ENCODE measurements at regions of chr3 and their contacts with region 1.

Region 1: DNA sequence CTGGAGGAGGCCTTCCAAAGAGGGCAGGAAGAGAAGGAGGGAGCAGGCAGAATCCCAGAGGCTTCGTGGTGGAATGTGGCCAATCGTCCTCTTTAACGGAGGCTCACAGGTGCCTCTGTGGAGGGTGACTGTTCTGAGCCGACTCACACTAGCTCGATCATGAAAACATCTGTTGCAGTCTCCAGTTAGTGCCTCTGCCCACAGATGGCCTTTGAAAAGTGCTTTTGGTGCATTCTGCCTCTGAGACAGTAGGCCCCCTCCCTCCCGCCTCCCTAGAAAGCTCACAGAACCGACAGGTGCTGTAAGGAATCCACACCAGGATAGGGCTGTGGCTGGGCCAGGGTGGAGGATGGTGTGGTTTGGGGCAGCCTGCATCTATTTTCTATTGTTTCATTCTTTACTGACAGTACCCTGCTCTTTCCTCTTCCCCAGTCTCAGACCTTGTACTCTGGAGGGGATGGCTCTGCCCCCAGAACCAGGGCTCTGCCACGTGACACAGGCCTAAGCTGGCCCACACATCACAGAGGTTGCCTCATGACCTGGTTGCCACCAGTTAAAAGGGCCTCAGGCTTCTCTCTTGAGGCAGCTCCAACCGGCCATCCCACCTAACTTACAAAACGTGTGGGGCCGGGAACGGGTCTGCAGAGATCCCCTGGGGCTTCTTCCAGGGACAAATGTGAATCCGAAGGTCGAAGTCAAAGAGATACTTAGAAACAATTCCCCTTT is 27.2 kb upstream of the PIGZ start:
- DNase-seq: no peak
- H3K4me3 ChIP-seq: no peak overlapping the region
- CTCF ChIP-seq: no peak

Region 2: GRCh38 chr3:195697582-195698301 is 1298.1 kb before region 1 on chr3:
- in situ Hi-C with region 1: no loop called
- DNase-seq: peak; percentile 86
- H3K4me3 ChIP-seq: no peak overlapping the region
- CTCF ChIP-seq: no peak

Region 3: DNA sequence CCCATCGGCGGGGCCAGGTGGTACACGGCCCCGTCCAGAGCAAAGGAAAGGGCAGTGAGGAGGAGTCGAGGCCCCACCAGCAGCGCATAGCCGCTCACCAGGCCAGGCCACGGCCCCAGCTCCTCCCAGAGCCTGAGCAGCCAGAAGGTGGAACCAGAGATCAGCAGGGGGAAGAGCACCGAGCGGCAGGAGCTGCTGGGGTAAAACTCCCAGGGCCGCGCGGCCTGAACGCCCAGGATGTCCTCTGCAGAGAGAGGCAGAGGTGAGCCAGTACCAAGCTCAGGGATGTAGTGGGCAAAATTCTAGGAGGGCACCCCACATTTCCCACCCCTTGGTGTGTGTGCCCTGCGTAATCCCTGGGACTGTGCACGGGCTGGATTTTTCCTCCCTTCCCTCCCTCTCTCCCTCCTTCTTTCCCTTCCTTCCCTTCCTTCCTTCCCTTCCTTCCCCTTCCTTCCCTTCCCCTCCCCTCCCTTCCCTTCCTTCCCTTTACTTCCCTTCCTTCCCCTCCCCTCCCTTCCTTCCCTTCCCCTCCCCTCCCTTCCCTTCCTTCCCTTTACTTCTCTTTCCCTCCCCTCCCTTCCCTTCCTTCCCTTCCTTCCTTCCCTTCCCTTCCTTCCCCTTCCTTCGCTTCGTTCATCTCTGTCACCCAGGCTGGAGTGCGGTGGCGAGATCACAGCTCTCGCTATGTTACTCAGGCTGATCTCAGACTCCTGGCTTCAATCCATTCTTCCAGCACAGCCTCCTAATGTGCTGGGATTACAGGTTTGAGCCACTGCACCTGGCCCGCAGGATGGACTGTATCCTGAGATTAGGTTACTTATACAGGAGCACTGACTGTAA is 47.1 kb before region 1 on chr3:
- in situ Hi-C with region 1: loop called (anchors 5 kb)
- DNase-seq: no peak
- H3K4me3 ChIP-seq: no peak overlapping the region
- CTCF ChIP-seq: peak; percentile 14

Region 4: GRCh38 chr3:196962108-196962929 is 33.5 kb before region 1 on chr3:
- in situ Hi-C with region 1: no loop called
- DNase-seq: no peak
- H3K4me3 ChIP-seq: no peak overlapping the region
- CTCF ChIP-seq: no peak

Region 5: GRCh38 chr3:197050511-197050910 is 54.7 kb after region 1 on chr3:
- in situ Hi-C with region 1: no loop called
- DNase-seq: no peak
- H3K4me3 ChIP-seq: no peak overlapping the region
- CTCF ChIP-seq: no peak

Region 6: DNA sequence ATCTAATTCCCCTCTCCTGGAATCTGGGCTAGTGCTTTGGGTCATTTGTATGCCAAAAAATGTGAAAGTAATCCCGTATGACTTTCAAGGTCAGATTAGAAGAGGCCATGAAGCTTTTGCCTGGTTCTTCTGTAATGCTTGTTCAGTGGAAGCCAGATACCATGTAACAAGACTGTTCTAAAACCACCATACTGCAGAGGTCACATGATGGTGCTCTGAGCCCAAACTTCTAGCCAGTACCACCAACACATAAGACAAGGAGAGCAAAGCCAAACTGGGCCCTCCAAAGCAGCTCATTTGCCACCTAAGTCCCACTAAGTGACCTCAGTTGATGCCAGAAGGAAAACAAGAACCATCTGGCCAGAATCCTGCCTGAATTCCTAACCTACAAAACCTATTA is 98.1 kb after region 1 on chr3:
- in situ Hi-C with region 1: loop called (anchors 5 kb)
- DNase-seq: no peak
- H3K4me3 ChIP-seq: no peak overlapping the region
- CTCF ChIP-seq: no peak

Region 7: GRCh38 chr3:197533927-197534340 is 538.1 kb after region 1 on chr3:
- in situ Hi-C with region 1: no loop called
- DNase-seq: no peak
- H3K4me3 ChIP-seq: no peak overlapping the region
- CTCF ChIP-seq: no peak

Measured in astrocyte of the cerebellum (primary cell).